ENCODE measurements at regions of chr19 and their contacts with region 1.

Region 1: DNA sequence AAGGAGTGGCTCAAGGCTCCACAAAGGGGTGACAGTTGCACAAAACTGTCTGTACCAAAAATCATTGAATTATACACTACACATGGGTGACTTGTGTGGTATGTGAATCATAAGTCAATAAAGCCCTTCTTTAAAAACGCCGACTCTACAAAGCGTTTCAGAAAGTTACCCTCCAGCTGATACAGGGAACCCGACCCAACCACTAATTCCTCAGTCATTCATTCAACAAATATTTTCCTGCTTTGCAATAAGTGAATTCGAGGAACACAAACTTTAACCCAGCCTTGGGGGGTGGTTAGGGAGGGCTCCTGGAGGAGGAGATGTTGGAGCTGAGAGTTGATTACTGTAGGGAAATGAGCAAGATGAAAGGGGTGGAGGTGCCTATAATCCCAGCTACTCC is 32.0 kb downstream of the LTBP4 start:
- H3K4me3 ChIP-seq: no peak overlapping the region
- H3K27ac ChIP-seq: no peak overlapping the region
- H3K4me1 ChIP-seq: no peaks in the 10 kb centered on the region
- CTCF ChIP-seq: no peak

Region 2: DNA sequence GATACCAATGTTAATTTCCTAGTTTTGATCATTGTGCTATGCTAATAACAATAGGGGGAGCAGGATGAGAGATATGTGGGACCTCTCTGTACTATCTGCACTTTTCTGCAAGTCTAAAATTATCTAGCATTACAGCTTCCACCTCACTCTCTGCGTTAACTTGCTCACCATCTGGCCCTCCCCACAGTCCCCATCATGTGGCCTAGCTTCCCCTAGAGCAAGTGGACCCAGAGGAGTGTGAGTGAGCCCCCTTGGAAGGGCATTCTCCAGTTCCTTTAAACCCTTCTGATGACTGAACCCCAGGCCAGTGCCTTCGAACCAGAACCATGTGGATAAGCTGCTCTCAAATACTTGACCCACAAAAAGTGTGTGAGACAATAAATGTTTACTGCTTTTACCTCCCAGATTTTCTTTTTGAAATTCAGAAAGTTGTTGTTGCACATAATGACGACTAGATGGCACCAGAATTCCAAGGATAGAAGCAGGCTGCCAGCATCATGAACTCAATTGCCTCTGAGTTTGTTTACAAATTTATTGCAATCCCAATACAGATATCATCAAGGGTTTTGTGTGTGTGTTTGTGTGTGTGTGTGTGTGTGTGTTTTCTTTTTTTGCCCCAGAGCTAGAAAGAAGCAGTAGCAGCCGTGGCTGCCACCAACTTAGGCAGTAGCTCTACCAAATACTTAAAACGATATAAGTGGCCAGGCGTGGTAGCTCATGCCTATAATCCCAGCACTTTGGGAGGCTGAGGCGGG is 493.5 kb before region 1 on chr19:
- CTCF ChIA-PET with region 1: interaction called, 14 read pairs
- POLR2A ChIA-PET with region 1: no interaction called
- H3K4me3 ChIP-seq: no peak overlapping the region
- H3K27ac ChIP-seq: no peak overlapping the region
- H3K4me1 ChIP-seq: no peaks in the 10 kb centered on the region
- CTCF ChIP-seq: peak; percentile 89

Region 3: GRCh38 chr19:40381321-40381720 is 251.9 kb before region 1 on chr19:
- CTCF ChIA-PET with region 1: no interaction called
- POLR2A ChIA-PET with region 1: no interaction called
- H3K4me3 ChIP-seq: no peak overlapping the region
- H3K27ac ChIP-seq: no peak overlapping the region
- H3K4me1 ChIP-seq: no peaks in the 10 kb centered on the region
- CTCF ChIP-seq: peak; percentile 61

Region 4: DNA sequence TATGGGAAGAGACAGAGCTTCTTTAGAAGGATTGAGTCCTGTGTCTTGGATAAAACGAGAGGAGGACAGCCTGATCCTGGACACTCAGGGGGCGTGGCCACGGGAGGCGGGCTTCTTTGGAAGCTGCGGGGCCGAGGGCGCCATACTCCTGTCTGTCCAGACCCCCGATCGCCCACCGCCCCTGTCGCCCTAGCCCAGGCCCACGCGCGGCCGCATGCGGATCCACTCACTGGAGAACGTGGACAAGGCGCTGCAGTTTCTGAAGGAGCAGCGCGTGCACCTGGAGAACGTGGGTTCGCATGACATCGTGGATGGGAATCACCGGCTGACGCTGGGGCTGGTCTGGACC is 143.4 kb before region 1 on chr19:
- CTCF ChIA-PET with region 1: interaction called, 18 read pairs
- POLR2A ChIA-PET with region 1: no interaction called
- H3K4me3 ChIP-seq: no peak overlapping the region
- H3K27ac ChIP-seq: no peak overlapping the region
- H3K4me1 ChIP-seq: no peaks in the 10 kb centered on the region
- CTCF ChIP-seq: no peak

Region 5: DNA sequence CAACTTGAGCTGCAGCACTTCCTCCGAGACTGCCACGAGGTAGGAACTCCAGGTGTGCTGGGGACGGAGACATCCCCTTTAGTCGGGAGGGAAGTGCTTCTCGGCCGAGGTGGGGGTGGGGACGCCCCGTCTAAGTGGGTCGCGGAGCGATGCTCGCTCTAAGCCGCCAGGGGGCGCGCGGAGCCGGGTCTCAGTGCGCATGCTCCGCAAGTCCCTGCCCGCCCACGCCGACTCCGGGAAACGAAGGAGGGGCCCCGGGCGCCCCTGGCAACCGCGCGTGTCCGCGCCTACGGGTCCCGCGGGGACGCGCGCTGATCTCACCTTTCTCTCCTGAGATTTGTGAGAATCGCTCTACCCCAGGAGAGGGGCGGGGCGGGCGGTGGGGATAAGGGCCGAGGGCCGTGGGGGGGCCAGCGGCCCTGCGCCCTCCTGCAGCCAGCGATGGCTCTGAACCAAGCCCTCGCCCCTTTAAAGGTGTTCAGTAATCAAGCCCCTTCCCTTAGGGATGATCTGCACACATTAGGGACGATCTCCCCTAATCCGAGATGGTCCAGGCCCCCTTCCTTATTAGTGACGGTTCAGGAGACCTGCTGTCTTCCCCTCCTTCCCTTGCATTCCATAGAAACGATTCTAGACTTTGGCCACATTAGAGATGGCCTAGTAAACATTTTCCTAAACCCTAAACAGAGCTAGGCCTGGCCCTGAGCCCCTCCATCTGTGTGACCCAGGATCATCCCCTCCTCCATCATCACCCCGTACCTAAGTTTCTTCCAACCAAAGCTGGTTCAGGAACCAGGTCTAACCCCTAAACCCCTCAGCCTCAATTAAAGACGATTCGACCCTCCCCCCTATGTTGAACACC is 103.9 kb before region 1 on chr19:
- CTCF ChIA-PET with region 1: interaction called, 38 read pairs
- POLR2A ChIA-PET with region 1: no interaction called
- H3K4me3 ChIP-seq: peak overlapping the region; percentile 19
- H3K27ac ChIP-seq: peak overlapping the region; percentile 39
- H3K4me1 ChIP-seq: peaks cover 17% of the 10 kb centered on the region
- CTCF ChIP-seq: peak; percentile 100

Region 6: GRCh38 chr19:40549007-40549708 is 84.0 kb before region 1 on chr19:
- CTCF ChIA-PET with region 1: interaction called, 140 read pairs
- POLR2A ChIA-PET with region 1: interaction called, 5 read pairs
- H3K4me3 ChIP-seq: peak overlapping the region; percentile 2
- H3K27ac ChIP-seq: no peak overlapping the region
- H3K4me1 ChIP-seq: peaks cover 9% of the 10 kb centered on the region
- CTCF ChIP-seq: peak; percentile 98

Region 7: GRCh38 chr19:40578442-40578908 is 54.7 kb before region 1 on chr19:
- CTCF ChIA-PET with region 1: interaction called, 28 read pairs
- POLR2A ChIA-PET with region 1: no interaction called
- H3K4me3 ChIP-seq: no peak overlapping the region
- H3K27ac ChIP-seq: peak overlapping the region; percentile 11; the same call in 1 of the 2 replicates
- H3K4me1 ChIP-seq: peaks cover 6% of the 10 kb centered on the region
- CTCF ChIP-seq: no peak

Region 8: DNA sequence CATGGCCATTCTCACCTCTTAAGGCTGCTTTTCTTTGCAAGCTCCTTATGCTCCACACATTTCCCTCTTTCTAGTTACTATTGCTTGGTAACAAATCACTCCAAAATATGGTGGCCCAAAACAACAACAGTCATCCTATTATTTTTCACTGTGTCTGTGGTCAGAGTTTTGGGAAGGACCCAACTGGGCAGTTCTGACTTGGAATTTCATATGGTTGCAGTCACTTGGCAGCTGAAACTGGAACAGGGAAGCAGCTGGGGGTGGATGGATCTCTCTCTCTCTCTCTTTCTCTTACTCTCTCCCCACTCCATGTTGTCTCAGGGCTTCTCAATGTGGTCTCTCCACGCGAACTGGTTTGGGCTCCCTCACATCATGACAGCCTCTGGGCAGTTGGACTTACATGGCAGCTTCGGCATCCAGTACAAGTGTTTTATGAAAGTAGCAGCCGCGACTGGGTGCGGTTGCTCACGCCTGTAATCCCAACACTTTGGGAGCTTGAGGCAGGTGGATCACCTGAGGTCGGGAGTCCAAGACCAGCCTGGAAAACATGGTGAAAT is 17.6 kb after region 1 on chr19:
- CTCF ChIA-PET with region 1: interaction called, 174 read pairs
- POLR2A ChIA-PET with region 1: interaction called, 4 read pairs
- H3K4me3 ChIP-seq: no peak overlapping the region
- H3K27ac ChIP-seq: no peak overlapping the region
- H3K4me1 ChIP-seq: peaks cover 11% of the 10 kb centered on the region
- CTCF ChIP-seq: no peak

Region 9: GRCh38 chr19:40813182-40813958 is 180.2 kb after region 1 on chr19:
- CTCF ChIA-PET with region 1: no interaction called
- POLR2A ChIA-PET with region 1: no interaction called
- H3K4me3 ChIP-seq: no peak overlapping the region
- H3K27ac ChIP-seq: no peak overlapping the region
- H3K4me1 ChIP-seq: peaks cover 10% of the 10 kb centered on the region
- CTCF ChIP-seq: no peak